Tibial artery (tissue), 4 donors: ENCODE measurements at regions of chr4 and their contacts with region 1.

Region 1: GRCh38 chr4:121736735-121737351 is 28.1 kb downstream of the SMIM43 start:
- DNase-seq: peak in 1 of 2 donors; percentile 27
- H3K4me3 ChIP-seq: no peak overlapping the region
- H3K27ac ChIP-seq: no peak overlapping the region
- H3K4me1 ChIP-seq: no peaks in the 10 kb centered on the region
- H3K27me3 ChIP-seq: peaks cover 0 to 3% of the 10 kb centered on the region in 2 donors
- CTCF ChIP-seq: peak; percentile 42 to 47

Region 2: DNA sequence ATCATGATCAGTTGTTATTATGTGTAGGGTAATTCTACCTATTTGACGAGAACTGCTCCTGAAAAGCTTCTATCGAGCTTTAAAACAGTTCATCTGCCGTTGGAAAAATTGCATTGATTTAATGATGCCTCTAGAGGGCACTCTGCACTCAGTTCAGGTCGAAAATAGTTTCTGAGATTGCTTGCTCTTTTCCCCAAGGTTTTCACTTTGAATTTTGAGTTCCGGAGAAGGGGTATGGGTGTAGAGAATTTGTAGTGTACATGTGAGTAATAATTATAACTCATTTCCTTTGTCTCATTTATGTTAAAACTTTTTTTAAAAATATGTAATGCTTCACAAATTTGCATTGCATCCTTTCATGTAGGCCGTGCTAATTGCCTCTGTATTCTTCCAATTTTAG is 544.4 kb before region 1 on chr4:
- intact Hi-C with region 1: loop called (anchors 10 kb)
- DNase-seq: no peak
- H3K4me3 ChIP-seq: no peak overlapping the region
- H3K27ac ChIP-seq: no peak overlapping the region
- H3K4me1 ChIP-seq: no peaks in the 10 kb centered on the region
- H3K27me3 ChIP-seq: peaks cover 0 to 4% of the 10 kb centered on the region in 2 donors
- CTCF ChIP-seq: peak; percentile 48 to 58

Region 3: DNA sequence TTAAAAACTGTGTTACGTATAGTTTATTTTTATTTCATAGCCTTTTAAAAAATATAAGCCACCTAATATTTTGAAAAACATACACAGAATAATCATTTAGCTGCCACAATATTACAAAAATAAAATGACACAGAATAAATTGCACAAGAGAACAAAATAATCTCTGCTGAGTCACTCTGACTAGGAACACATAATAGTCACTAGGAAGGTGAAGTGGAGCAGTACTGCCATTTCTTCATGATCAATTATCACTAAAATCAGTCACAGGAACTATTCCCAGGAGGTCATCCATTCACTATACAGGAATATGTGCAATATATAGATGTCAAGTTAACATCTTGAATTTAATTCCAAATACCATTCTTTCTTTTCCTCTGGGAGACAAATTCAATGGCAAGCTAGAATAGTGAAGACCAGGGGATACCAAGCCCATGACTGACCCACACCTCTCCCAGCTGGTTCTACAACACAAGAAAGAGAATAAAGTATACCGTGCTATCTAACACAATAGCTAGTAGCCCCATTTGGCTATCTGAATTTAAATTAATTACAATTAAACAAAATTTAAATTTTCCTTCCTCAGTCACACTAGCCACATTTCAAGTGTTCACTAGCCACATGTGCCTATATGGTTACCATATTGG is 22.2 kb after region 1 on chr4:
- intact Hi-C with region 1: no loop called
- DNase-seq: no peak
- H3K4me3 ChIP-seq: no peak overlapping the region
- H3K27ac ChIP-seq: no peak overlapping the region
- H3K4me1 ChIP-seq: no peaks in the 10 kb centered on the region
- H3K27me3 ChIP-seq: peaks cover 0 to 8% of the 10 kb centered on the region in 2 donors
- CTCF ChIP-seq: no peak

Region 4: GRCh38 chr4:122052677-122053076 is 315.8 kb after region 1 on chr4:
- intact Hi-C with region 1: no loop called
- DNase-seq: no peak
- H3K4me3 ChIP-seq: no peak overlapping the region
- H3K27ac ChIP-seq: no peak overlapping the region
- H3K4me1 ChIP-seq: no peaks in the 10 kb centered on the region
- H3K27me3 ChIP-seq: no peaks in the 10 kb centered on the region
- CTCF ChIP-seq: no peak